Calu3 (cell line): ENCODE measurements at regions of chr9 and their contacts with region 1.

Region 1: GRCh38 chr9:72680593-72681282 is 159.3 kb downstream of the TMC1 start:
- DNase-seq: no peak
- H3K4me3 Mint-ChIP-seq: no peak overlapping the region
- H3K27ac Mint-ChIP-seq: no peak overlapping the region
- H3K4me1 Mint-ChIP-seq: peaks cover 24% of the 10 kb centered on the region
- H3K27me3 Mint-ChIP-seq: no peaks in the 10 kb centered on the region
- CTCF ChIP-seq: no peak

Region 2: DNA sequence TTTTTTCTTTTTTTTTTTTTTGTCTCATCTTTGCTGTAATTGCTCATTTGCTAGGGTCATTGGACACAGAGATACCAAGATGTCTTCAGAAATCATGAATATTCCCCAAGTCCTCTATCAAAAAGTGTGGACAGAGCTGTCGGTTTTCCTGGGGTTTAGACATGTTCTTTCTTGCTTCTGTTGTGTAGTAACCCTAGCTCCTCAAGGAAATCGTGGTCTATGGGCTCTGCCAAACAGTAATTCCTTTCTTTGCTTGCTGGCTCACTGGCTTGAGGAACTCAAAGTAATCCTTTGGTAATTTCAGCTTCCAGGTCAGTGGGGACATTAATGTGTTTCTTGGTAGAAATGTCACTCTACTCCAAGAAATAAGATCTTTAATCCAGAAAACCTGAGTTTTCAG is 57.6 kb before region 1 on chr9:
- CTCF ChIA-PET with region 1: no interaction called
- intact Hi-C with region 1: loop called (anchors 10 kb)
- DNase-seq: no peak
- H3K4me3 Mint-ChIP-seq: no peak overlapping the region
- H3K27ac Mint-ChIP-seq: no peak overlapping the region
- H3K4me1 Mint-ChIP-seq: no peaks in the 10 kb centered on the region
- H3K27me3 Mint-ChIP-seq: no peaks in the 10 kb centered on the region
- CTCF ChIP-seq: no peak

Region 3: GRCh38 chr9:72753266-72753893 is 72.6 kb after region 1 on chr9:
- CTCF ChIA-PET with region 1: no interaction called
- intact Hi-C with region 1: no loop called
- DNase-seq: peak; percentile 17
- H3K4me3 Mint-ChIP-seq: no peak overlapping the region
- H3K27ac Mint-ChIP-seq: no peak overlapping the region
- H3K4me1 Mint-ChIP-seq: peaks cover 12% of the 10 kb centered on the region
- H3K27me3 Mint-ChIP-seq: no peaks in the 10 kb centered on the region
- CTCF ChIP-seq: no peak

Region 4: DNA sequence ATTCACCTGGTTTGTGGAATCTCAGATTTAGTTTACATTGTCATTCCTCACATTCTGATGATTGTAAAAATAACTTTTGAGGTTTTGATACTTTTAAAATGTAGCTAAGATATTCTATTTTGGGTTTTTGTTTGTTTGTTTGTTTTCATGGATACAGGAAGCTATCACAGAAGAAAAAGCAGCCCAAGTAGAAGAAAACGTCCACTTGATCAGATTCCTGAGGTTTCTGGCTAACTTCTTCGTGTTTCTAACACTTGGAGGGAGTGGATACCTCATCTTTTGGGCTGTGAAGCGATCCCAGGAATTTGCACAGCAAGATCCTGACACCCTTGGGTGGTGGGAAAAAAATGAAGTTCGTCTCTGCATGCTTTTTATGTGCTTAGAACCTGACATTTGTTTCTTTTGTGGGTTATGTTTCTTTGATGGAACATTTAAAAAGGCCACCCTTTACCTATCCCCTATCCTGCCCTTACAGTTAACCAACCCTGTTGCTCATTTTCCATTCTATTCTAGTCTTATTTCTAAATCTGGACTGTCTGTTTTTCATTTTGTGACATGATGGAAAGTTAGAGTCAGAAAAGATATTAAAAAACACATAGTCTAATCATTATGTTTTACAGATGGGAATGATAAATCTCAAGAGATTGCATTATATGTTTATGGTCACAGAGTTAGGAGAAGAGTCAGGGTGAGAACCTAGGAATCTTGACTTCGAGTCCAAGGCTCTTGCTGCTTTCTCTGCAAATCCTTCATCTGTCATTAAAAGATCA is 108.4 kb after region 1 on chr9:
- CTCF ChIA-PET with region 1: no interaction called
- intact Hi-C with region 1: loop called (anchors 10 kb)
- DNase-seq: no peak
- H3K4me3 Mint-ChIP-seq: no peak overlapping the region
- H3K27ac Mint-ChIP-seq: no peak overlapping the region
- H3K4me1 Mint-ChIP-seq: no peaks in the 10 kb centered on the region
- H3K27me3 Mint-ChIP-seq: no peaks in the 10 kb centered on the region
- CTCF ChIP-seq: no peak

Region 5: GRCh38 chr9:72812559-72813111 is 131.9 kb after region 1 on chr9:
- CTCF ChIA-PET with region 1: no interaction called
- intact Hi-C with region 1: no loop called
- DNase-seq: no peak
- H3K4me3 Mint-ChIP-seq: no peak overlapping the region
- H3K27ac Mint-ChIP-seq: no peak overlapping the region
- H3K4me1 Mint-ChIP-seq: no peaks in the 10 kb centered on the region
- H3K27me3 Mint-ChIP-seq: no peaks in the 10 kb centered on the region
- CTCF ChIP-seq: no peak